Activated T-helper 2 cell treated with anti-CD3 and anti-CD28 coated beads, Interferon-gamma antibody, Interleukin-2, Interleukin-4, amounts not matched to agents 10 μg/mL and 5 μg/mL and 100 μg/mL, durations not matched to agents 14 hours and 24 hours and 36 hours (primary cell): ENCODE measurements at regions of chr9 and their contacts with region 1.

Region 1: GRCh38 chr9:37485389-37486219 is at the start of gene POLR1E:
- DNase-seq: peak; percentile 95
- H3K4me3 Mint-ChIP-seq: peak within 1 kb of the TSS; percentile 100
- H3K27ac Mint-ChIP-seq: peak within 1 kb of the TSS; percentile 95
- H3K4me1 Mint-ChIP-seq: peaks cover 33% of the 10 kb centered on the region
- H3K27me3 Mint-ChIP-seq: peaks cover 5% of the 10 kb centered on the region
- total RNA-seq, gene POLR1E: 48.0 and 49.4 TPM in 2 replicates

Region 2: GRCh38 chr9:37408933-37409710 is 76.5 kb before region 1 on chr9:
- intact Hi-C with region 1: no loop called
- DNase-seq: peak; percentile 54
- H3K4me3 Mint-ChIP-seq: no peak overlapping the region
- H3K27ac Mint-ChIP-seq: peak overlapping the region; percentile 17
- H3K4me1 Mint-ChIP-seq: peaks cover 26% of the 10 kb centered on the region
- H3K27me3 Mint-ChIP-seq: no peaks in the 10 kb centered on the region

Region 3: GRCh38 chr9:37422289-37423104 is 63.1 kb before region 1 on chr9 and contains the start of gene GRHPR:
- intact Hi-C with region 1: loop called (anchors 1 kb)
- DNase-seq: peak; percentile 84
- H3K4me3 Mint-ChIP-seq: peak within 1 kb of the TSS; percentile 96
- H3K27ac Mint-ChIP-seq: peak within 1 kb of the TSS; percentile 96
- H3K4me1 Mint-ChIP-seq: peaks cover 12% of the 10 kb centered on the region
- H3K27me3 Mint-ChIP-seq: no peaks in the 10 kb centered on the region
- total RNA-seq, gene GRHPR: 75.4 and 77.4 TPM in 2 replicates

Region 4: DNA sequence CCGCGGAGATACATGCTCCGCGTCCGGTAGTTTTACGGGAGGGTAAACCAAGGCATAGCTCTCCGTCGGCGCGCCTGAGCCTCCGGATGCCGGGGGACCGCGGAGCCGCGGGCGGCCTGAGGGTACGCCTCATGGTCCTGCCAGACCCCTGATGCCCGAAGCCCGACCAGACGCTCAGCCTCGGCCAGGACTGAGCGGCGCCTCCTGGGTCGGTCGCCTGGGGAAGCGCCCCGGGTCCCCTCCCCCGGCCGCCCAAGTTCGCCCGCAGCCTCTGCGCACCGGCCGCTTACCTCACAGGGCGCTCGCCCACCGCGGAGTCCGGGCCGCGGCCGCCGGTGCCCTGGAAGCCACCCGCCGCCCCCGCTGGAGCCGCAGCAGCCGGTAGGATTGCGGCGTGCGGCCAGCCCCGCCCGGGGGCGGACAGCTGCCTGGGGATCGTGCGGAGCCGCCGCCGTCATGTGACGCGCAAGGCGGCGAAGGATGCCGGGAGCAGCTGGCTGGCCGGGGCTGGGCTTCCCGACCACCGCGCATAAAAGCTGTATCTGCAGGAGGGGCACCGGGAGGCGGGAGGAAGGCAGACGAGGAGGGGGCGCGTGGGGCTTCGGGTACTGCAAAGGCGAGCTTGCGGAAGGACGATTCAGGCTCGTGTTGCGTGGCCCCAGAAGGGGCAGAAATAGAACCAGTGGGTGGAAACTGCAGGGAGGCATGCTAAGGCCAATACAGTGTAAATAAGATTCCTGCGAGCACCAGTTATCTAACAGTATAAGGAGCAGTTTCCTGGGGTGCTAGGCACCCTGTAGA is 90.5 kb after region 1 on chr9 and contains the start of gene FBXO10:
- intact Hi-C with region 1: loop called (anchors 5 kb)
- DNase-seq: peak; percentile 44
- H3K4me3 Mint-ChIP-seq: peak within 1 kb of the TSS; percentile 79
- H3K27ac Mint-ChIP-seq: no peak within 1 kb of the TSS
- H3K4me1 Mint-ChIP-seq: peaks cover 12% of the 10 kb centered on the region
- H3K27me3 Mint-ChIP-seq: peaks cover 15% of the 10 kb centered on the region
- total RNA-seq, gene FBXO10: 1.8 and 2.4 TPM in 2 replicates

Region 5: DNA sequence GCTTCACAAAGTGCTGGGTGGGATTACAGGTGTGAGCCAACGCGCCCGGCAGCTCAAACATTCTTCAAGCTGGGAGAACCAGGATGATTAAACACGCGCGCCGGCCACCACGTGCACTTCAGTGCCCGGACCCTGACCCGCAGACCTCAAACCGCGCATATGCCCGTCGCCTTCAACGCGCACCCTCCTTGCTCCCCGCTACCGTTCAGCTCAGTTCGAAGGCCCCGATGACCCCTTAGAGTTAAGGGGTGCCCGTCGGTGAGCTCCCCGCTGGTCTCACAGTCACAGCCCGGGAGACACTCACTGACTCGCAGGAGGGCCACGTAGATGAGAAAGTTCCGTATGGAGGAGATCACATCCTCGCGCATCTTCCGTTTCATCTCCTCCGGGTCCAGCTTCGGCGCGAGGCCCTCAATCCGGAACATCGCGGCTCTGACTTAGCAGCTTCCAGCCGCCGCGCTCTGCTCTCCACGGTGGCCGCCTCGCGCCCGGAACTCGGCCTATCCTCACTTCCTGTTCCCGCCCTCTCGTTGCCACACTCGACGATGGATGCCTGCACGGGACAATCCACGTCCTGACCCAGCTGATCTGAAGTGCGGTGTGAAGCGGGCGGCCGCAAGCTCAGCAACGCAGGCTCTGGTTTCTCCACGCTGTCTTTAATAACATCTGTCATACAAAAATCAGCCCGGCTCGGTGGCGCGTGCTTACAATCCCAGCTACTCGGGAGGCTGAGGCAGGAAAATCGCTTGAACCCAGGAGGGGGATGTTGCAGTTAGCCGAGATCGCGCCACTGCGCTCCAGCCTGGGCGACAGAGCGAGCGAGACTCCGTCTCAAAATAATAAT is 106.7 kb after region 1 on chr9 and contains the start of gene TOMM5:
- intact Hi-C with region 1: loop called (anchors 5 kb)
- DNase-seq: peak; percentile 89
- H3K4me3 Mint-ChIP-seq: peak within 1 kb of the TSS; percentile 98
- H3K27ac Mint-ChIP-seq: peak within 1 kb of the TSS; percentile 97
- H3K4me1 Mint-ChIP-seq: peaks cover 22% of the 10 kb centered on the region
- H3K27me3 Mint-ChIP-seq: peaks cover 16% of the 10 kb centered on the region
- total RNA-seq, gene TOMM5: 153 and 155 TPM in 2 replicates